Motor neuron (in vitro differentiated cells): ENCODE measurements at regions of chr15 and their contacts with region 1.

Region 1: DNA sequence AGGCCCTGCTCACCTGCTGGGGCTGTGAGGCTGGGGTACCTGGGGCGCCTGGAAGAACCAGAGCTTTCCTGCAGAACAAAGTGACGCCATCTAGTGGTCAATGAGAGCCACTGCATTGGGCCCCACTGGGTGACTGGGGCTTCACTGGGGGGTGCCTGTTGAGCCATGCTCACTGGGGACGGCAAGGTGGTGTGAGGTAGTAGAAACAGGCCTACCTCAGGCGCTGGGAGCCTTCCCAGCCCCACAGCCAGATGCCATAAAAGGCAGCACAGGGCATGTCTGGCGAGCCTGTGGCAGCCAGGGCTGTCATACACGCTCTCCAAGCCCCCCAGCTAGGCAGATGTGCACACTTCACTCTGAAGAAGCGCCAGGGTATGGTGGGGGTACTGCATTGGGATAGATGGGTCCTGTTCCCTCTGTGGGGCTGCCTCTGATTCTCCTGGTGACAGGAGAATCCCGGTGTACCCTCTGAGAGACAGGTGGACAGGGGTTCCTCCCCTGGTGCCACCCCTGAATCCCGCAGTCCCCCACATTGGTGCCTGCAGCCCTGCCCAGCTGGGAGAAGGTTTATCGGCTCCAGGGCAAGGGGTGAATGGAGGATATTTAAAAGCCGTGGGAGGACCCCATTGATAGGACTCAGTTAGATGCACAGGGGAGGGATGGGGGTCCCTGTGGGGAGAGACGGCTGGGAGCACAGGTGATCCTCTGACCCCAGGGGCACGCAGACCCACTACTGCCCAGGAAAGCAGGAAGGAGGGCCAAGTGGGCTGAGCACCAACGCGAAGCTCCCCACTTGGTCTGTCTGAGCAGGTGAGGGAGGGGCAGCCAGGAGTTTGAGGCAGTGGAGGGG is 178.8 kb downstream of the NSMCE3 start:
- ATAC-seq: peak in 6 of 8 experiments; percentile 14 to 75 (median 35)
- H3K4me3 ChIP-seq: no peak overlapping the region
- H3K27ac ChIP-seq: no peak overlapping the region
- H3K4me1 ChIP-seq: peaks cover 8 to 10% of the 10 kb centered on the region in 2 donors

Region 2: GRCh38 chr15:28191832-28192231 is 899.0 kb before region 1 on chr15:
- in situ Hi-C with region 1: loop called in 1 of 9 experiments (anchors 25 kb)
- ATAC-seq: peak in 6 of 8 experiments; percentile 85 to 100 (median 95)
- H3K4me3 ChIP-seq: no peak overlapping the region
- H3K27ac ChIP-seq: no peak overlapping the region
- H3K4me1 ChIP-seq: peaks cover 0 to 4% of the 10 kb centered on the region in 2 donors

Region 3: DNA sequence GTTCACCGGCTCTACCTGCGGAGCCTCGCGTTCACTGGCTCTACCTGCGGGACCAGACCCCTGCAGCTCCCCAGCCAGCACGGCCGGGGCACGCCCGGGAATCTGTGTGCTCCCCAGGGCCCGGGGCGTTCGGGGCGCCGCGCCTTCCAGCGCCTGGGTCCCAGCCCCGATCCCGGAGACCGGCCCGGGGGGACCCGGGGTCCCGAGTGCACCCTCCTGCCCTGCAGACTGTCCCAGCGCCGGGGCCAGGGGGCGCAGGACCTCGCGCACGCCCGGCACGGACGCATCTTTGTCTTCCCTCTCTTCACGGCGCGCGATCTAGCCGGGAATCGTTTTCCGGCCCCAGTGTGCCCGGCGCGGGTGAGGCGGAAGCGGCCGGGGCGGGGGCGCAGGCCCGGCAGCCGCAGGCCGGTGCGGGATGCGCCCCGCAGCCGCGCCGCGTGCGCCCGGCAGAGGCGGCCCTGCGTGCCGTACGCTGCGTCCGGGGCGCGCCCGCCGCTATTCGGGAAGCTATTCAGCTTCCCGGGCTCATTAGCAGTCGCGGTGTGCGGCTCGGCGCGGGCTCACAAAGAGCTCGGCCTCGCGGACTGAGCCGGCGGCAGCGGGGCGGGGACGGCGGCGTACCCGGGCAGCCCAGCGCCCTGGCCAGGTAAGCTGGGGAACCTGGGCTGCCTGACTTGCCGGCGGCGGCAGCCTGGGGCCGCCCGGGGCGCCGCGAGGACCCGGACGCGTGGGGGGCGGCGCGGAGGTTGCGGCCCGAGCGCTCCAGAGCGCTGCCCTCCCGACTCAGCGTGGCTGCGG is 205.0 kb before region 1 on chr15 and contains the start of gene APBA2:
- in situ Hi-C with region 1: loop called in 4 of 9 experiments (anchors 25 kb)
- ATAC-seq: peak; percentile 77 to 88 (median 83)
- H3K4me3 ChIP-seq: peak within 1 kb of the TSS; percentile 85 to 97 (median 91)
- H3K27ac ChIP-seq: peak within 1 kb of the TSS; percentile 81 to 83
- H3K4me1 ChIP-seq: peaks cover 16 to 17% of the 10 kb centered on the region in 2 donors
- total RNA-seq, gene APBA2: 7.8 to 66.8 (median 40.0) TPM

Region 4: DNA sequence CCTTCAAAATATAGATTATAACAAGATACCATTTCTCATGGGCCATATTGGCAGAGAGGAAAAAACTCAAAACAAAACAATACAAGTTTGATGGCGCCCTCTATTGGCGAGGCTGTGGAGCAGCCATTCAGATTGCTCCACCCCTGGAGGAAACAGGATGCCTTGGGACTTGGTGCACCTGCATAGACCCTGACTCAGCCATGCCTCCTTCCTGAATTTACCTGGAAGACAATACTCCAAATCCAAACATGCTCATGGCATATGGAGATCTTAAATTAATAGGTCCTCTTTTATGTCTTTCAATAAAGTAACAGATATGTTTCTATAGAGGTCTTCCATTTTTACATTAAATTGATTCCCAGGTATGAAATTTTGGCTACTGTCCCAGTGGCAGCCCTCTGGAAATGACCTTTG is 115.1 kb before region 1 on chr15:
- in situ Hi-C with region 1: loop called in 1 of 9 experiments (anchors 25 kb)
- ATAC-seq: peak in 2 of 8 experiments; percentile 5 to 42
- H3K4me3 ChIP-seq: no peak overlapping the region
- H3K27ac ChIP-seq: no peak overlapping the region
- H3K4me1 ChIP-seq: peaks cover 12% of the 10 kb centered on the region in 2 donors

Region 5: DNA sequence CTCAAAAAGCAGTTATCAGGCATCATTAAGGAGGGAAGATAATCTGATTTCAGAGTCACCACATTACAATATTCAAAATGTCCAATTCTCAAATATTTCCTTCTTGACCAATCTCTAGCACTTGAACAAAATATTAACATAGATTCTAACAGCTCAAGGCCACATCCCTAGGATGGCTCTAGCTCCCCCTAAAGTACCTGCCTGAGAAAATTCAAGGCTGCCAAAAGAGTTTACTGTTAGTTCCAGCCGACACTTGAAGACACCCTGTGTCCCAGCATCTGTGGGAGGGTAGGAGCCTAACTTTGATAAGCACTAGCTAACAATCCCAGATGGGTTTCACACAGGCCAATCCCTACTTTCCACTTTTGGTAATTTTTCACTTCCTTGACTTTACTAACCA is 168.4 kb after region 1 on chr15:
- in situ Hi-C with region 1: no loop called
- ATAC-seq: peak in 3 of 8 experiments; percentile 43 to 77 (median 61)
- H3K4me3 ChIP-seq: no peak overlapping the region
- H3K27ac ChIP-seq: no peak overlapping the region
- H3K4me1 ChIP-seq: no peaks in the 10 kb centered on the region

Region 6: DNA sequence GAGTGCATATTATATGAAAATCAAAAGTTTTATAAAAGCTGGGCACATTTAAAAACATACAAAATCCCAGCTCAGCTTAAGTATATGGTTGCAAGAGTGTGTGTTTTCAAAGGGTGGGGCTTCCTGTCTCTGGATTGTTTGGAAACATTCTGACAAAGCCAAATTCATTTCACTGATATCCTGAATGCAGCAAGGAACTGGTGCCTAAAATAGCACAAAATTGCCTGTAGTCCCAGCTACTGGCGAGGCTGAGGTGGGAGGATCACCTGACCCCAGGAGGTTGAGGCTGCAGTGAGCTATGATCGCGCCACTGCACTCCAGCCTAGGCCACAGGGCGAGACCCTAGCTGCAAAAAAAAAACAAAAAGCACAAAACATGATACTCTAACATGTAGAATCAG is 744.5 kb after region 1 on chr15:
- in situ Hi-C with region 1: no loop called
- ATAC-seq: peak in 3 of 8 experiments; percentile 90 to 95 (median 92)
- H3K4me3 ChIP-seq: no peak overlapping the region
- H3K27ac ChIP-seq: no peak overlapping the region
- H3K4me1 ChIP-seq: no peaks in the 10 kb centered on the region

Region 7: DNA sequence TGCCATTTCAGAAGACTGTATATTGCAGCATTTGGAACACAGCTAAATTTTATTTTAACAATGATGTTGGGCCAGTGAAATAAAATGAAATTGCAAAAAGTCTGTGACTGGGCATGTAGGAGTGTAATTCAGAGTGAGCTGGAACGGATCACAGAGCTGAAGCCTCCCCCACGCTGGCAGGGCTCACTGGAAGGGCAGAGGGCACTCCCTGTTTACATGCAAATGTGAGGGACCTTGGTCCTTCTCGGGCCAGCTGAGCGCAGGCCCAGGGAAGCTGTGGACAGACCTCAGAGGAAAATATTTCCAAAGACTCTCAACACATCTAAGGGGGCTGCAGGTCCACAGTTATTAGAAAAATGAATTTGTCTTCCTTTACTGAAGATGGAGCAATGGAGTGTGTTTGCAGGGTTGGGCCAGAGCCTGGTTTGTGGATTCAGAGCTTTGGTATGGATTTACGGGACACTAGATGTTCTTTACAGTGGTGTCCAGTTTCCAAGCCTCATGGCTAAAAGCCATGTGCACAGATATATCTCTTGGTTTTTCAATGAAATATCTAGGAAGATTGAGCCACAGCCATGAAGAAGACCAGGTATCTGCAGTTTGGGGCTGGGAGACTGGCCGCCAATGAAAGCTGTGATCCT is 1978.6 kb after region 1 on chr15:
- in situ Hi-C with region 1: no loop called
- ATAC-seq: peak in 2 of 8 experiments; percentile 43 to 67
- H3K4me3 ChIP-seq: no peak overlapping the region
- H3K27ac ChIP-seq: no peak overlapping the region
- H3K4me1 ChIP-seq: peaks cover 0 to 6% of the 10 kb centered on the region in 2 donors